Gastrocnemius medialis (tissue), 4 donors: ENCODE measurements at regions of chr4 and their contacts with region 1.

Region 1: GRCh38 chr4:169485791-169486742 is 126.3 kb downstream of the NEK1 start:
- DNase-seq: no peak
- ATAC-seq: peak; percentile 54 to 55
- H3K4me3 ChIP-seq: no peak overlapping the region
- H3K27ac ChIP-seq: no peak overlapping the region
- H3K4me1 ChIP-seq: no peaks in the 10 kb centered on the region
- H3K27me3 ChIP-seq: no peaks in the 10 kb centered on the region
- CTCF ChIP-seq: peak in 4 of 5 experiments; percentile 20 to 42 (median 26)
- POLR2A ChIP-seq: no peak

Region 2: GRCh38 chr4:168585168-168586091 is 900.6 kb before region 1 on chr4:
- in situ Hi-C with region 1: no loop called
- intact Hi-C with region 1: loop called (anchors 2 kb)
- DNase-seq: peak; percentile 49 to 83
- ATAC-seq: peak; percentile 87 to 93
- H3K4me3 ChIP-seq: no peak overlapping the region
- H3K27ac ChIP-seq: peak overlapping the region in 1 of 4 donors; percentile 44
- H3K4me1 ChIP-seq: peaks cover 20 to 21% of the 10 kb centered on the region in 2 donors
- H3K27me3 ChIP-seq: no peaks in the 10 kb centered on the region
- CTCF ChIP-seq: peak; percentile 61 to 79 (median 71)
- POLR2A ChIP-seq: no peak

Region 3: DNA sequence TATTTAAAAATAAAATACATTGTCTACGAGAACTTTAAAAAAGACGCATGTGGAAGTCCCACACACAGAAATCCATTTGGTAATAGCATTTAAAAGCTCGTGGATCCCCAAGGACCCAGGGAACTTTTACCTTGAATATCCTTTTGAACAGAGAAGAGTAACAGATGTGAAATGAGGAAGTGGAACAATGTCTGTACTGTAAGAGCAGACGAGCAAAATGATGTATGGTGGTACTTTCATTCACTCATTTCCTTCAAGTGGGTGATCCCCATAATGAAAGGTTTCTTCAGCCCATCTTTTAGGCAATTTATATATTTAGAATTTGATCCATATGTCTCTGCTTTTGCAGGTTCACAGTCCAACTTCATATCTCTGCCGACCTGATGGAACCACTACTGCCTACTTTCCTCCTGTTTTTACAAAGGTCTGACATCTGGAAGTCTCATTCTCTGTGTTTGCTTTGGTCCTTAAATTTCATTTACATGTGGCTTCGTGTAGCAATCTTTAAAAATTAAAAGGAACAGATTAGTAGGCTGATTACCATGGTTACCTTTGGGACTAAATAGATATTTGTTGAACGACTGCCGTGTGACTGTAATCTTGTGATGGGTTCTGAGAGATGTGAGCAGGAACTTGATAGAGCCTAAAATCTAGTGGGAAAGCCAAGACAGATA is 800.8 kb before region 1 on chr4:
- in situ Hi-C with region 1: loop called in 2 of 4 experiments (anchors 25 kb)
- intact Hi-C with region 1: no loop called
- DNase-seq: no peak
- ATAC-seq: no peak
- H3K4me3 ChIP-seq: no peak overlapping the region
- H3K27ac ChIP-seq: no peak overlapping the region
- H3K4me1 ChIP-seq: peaks cover 0 to 7% of the 10 kb centered on the region in 2 donors
- H3K27me3 ChIP-seq: no peaks in the 10 kb centered on the region
- CTCF ChIP-seq: no peak
- POLR2A ChIP-seq: no peak

Region 4: DNA sequence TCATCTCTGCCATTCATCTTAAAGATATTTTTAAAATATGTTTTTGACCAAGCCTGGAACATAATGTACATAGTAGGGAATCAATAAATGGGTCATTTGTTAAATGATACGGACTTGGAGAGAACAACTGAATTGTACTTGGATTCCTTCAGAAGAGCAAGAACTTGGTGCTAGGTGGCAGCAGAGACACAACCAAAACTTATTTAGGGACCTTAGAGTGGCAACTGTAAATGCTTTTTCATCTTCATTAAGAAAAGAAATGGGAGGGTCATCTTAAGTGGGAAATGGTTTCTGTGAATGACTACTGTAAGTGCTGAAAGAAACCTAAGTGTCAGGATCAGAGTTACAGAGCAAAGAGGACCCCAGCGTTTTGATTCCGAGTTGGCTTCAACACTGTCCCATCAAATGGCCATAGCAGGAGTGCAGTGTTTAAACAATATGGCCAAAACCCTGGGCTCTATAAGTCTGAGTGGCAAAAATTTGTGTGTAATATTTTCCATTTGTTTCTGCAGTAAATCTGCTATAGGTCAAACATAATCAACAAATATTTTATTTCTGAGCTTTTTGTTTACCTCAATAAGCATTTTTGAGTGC is 775.6 kb before region 1 on chr4:
- in situ Hi-C with region 1: loop called in 2 of 4 experiments (anchors 25 kb)
- intact Hi-C with region 1: loop called (anchors 10 kb)
- DNase-seq: peak; percentile 17 to 43
- ATAC-seq: peak; percentile 66 to 74
- H3K4me3 ChIP-seq: no peak overlapping the region
- H3K27ac ChIP-seq: peak overlapping the region; percentile 29 to 72 (median 58)
- H3K4me1 ChIP-seq: peaks cover 24 to 26% of the 10 kb centered on the region in 2 donors
- H3K27me3 ChIP-seq: no peaks in the 10 kb centered on the region
- CTCF ChIP-seq: peak; percentile 48 to 75 (median 66)
- POLR2A ChIP-seq: no peak

Region 5: DNA sequence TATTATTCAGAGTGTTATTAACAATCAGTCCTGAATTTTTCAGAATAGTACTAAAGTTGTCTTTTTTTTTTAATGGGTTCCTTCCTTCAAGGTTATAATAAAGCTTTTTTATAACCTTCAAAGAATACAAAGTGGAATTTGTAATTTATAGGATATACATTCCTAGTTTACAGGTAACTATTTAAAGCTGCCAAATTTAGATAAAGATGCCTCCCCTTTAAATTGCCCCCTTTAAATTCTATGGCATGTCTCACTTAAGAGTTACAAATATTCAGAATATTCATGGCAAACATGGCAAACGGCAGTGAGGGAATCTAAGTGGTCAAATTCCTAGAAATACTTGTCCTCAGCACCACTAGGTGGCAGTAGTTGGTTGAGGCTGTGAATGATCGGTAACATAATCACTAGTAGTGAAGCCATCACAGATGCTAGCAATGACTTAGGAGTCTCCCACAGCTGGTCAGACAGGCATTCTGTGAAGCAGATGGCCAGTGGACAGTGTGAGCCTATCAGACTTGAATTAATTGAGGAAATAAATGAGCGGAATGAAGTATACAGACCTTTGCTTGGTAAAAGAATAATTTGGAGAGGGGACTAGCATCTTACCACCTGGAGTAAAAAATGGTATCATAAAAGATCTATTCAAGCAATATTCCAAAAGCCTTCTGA is 562.4 kb before region 1 on chr4:
- in situ Hi-C with region 1: loop called in 3 of 4 experiments (anchors 5 kb)
- intact Hi-C with region 1: loop called (anchors 2 kb)
- DNase-seq: peak in 1 of 2 donors; percentile 25
- ATAC-seq: peak; percentile 45 to 78
- H3K4me3 ChIP-seq: no peak overlapping the region
- H3K27ac ChIP-seq: no peak overlapping the region
- H3K4me1 ChIP-seq: peaks cover 0 to 6% of the 10 kb centered on the region in 2 donors
- H3K27me3 ChIP-seq: no peaks in the 10 kb centered on the region
- CTCF ChIP-seq: peak; percentile 71 to 80 (median 73)
- POLR2A ChIP-seq: no peak

Region 6: DNA sequence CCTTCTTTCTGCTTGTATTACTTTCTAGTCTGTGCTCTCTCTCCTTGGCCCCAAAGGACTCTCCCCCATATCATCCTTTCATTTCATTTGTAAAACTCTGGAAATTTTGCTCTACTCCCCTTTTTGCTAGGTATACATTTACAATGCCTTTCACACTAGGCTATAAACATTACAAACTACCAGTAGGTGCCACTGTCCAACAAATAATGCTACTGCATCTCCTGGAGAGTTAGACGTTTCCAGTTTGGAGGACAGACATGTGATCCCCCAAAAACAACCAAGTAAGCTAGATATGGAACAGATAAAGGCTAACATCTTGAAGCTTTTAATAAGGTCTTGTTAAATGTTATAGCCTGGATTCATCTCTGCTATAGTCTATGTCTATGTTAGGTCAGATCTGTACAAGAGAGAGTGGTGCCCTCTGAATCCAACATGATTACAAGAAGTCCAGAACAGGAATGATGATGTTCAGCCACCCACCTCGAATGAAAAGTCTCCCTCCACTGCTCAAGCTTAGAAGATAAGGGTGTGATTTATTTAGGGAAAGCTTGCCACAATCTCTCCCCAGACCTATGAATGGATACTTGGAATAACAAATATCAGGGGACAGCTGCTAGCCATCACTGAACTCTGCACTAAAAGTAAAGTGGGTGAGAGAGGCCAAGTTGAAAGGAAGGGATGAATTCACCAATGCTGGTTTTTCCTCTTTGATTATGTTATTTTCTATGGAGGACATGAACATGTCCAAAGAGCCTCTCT is 490.4 kb before region 1 on chr4:
- in situ Hi-C with region 1: loop called in 2 of 4 experiments (anchors 25 kb)
- intact Hi-C with region 1: loop called (anchors 2 kb)
- DNase-seq: no peak
- ATAC-seq: no peak
- H3K4me3 ChIP-seq: no peak overlapping the region
- H3K27ac ChIP-seq: no peak overlapping the region
- H3K4me1 ChIP-seq: peaks cover 17 to 20% of the 10 kb centered on the region in 2 donors
- H3K27me3 ChIP-seq: no peaks in the 10 kb centered on the region
- CTCF ChIP-seq: peak in 1 of 5 experiments; percentile 30
- POLR2A ChIP-seq: no peak

Region 7: DNA sequence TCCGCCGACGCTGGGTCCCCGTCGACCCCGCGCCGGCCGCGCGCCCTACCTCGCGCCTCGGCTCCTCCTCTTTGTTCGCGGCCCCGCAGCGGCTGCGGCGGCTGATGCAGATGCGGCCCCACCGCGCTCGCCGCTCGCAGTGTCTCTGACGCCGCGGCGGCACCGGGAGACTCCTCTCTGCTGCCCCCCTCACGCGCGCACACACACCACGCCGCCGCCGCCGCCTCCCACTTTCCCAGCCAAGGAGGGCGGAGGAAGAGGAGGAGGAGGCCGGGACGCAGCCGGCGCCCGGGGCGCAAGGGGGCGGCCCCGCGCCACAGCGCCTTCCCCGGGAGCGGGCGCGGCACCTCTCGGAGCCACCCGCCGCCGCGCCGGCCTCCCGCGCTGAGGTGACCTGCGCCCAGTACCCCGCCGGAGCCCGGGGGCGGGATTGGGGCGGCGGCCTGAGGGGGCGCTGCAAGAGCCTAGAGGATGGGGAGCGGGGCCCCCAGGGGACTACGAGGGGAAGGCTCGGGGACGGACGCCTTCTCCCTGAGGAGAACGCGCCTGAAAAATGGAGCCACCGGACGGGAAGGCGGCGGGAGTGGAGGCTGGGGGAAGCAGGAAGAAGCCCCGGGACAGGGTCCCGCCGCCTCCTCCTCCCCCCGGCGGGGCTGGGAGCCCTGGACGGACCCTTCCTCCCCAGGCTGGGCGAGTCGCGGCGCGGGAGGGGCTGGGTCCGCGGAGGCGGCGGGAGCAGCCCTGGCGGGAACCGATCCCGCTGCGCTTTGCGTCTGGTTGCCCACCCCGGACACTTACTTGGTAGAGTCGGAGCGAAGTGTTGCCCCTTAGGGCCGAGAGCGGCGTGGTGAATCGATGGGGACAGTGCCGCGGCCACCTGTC is 215.0 kb before region 1 on chr4 and contains the start of gene SH3RF1:
- in situ Hi-C with region 1: no loop called
- intact Hi-C with region 1: loop called (anchors 5 kb)
- DNase-seq: peak; percentile 81 to 83
- ATAC-seq: peak; percentile 85 to 88
- H3K4me3 ChIP-seq: peak within 1 kb of the TSS; percentile 73 to 95 (median 92)
- H3K27ac ChIP-seq: peak within 1 kb of the TSS; percentile 87 to 95 (median 94)
- H3K4me1 ChIP-seq: peaks cover 22 to 24% of the 10 kb centered on the region in 2 donors
- H3K27me3 ChIP-seq: no peaks in the 10 kb centered on the region
- CTCF ChIP-seq: peak in 3 of 5 experiments; percentile 35 to 52 (median 44)
- POLR2A ChIP-seq: peak; percentile 89 to 95
- total RNA-seq, gene SH3RF1: 12.6 to 27.0 (median 13.4) TPM